ENCODE measurements at regions of chr12 and their contacts with region 1.

Region 1: DNA sequence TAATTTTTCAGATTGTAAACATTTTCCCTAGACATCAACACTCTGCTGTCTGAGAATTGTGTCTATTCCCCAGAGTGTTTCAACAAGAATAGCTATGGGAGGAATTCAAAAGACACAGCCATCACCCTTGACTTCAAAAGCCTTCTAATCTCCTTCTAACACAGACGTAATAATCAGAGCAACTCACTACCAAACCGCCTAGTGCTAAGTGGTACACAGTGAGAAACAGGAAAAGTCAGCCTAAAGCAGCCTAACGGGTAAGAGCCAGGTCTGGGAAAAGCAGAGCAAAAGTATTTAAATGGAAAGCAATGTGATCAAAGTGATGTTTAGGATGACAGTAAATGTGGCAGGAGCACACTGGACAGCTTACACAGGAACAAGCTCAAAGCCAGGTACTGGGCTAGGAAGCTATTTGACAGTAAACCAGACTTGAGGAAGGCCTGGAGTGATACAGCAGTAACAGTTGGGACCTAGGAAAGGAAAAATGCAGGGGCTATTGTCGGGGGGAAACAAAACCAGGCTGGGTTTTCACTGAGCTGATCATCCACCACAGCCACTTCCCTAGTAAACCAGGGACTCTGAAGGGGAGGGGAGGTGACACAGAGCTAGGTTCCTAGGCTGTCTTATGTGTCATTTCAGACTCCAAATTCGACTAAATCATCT is 29.4 kb downstream of the CORO1C start:
- DNase-seq: no peak
- H3K4me3 ChIP-seq: no peak overlapping the region
- H3K27ac ChIP-seq: no peak overlapping the region
- H3K4me1 ChIP-seq: no peaks in the 10 kb centered on the region
- CTCF ChIP-seq: no peak

Region 2: DNA sequence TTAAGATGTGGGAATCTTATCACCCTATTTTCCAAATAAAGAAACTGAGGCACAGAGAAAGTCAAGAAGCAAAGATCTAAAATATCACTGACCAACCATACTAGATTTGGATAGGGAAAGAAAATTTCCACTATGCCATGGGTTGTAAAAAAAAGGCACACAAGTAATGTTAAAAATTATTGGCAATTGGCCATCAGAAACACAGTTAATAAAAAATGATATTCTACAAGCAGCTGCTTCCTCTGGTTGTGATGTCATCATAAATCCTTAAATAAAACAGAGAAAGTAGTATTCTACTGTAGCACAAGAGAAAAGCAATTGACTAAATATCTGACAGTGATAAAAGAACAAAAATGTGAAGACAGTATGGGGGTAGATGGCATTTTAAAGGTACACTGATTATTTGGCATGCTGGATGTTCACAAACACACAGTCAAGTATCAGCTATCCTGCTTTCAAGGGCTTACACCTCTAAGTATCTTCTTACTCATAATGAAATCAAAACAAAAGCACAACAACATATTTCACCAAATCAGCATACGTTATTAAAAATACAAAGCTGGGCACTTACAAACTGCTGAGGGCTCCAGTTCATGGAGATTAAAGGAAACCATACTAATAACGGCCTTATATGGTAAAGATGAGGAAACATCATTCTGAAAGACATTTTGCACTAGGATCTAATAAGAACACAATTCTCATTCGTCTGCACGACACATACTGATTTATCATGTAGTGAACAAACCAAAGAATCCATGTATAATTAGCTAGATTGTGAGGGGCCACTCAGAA is 16.2 kb before region 1 on chr12:
- CTCF ChIA-PET with region 1: interaction called, 4 read pairs
- POLR2A ChIA-PET with region 1: interaction called, 14 read pairs
- intact Hi-C with region 1: no loop called
- DNase-seq: no peak
- H3K4me3 ChIP-seq: no peak overlapping the region
- H3K27ac ChIP-seq: no peak overlapping the region
- H3K4me1 ChIP-seq: peaks cover 29% of the 10 kb centered on the region
- CTCF ChIP-seq: no peak

Region 3: GRCh38 chr12:109033234-109034196 is 331.6 kb after region 1 on chr12:
- CTCF ChIA-PET with region 1: no interaction called
- POLR2A ChIA-PET with region 1: no interaction called
- intact Hi-C with region 1: no loop called
- DNase-seq: no peak
- H3K4me3 ChIP-seq: no peak overlapping the region
- H3K27ac ChIP-seq: no peak overlapping the region
- H3K4me1 ChIP-seq: no peaks in the 10 kb centered on the region
- CTCF ChIP-seq: no peak